ENCODE measurements at regions of chr3 and their contacts with region 1.

Region 1: GRCh38 chr3:49171119-49171774 is at the start of gene KLHDC8B:
- DNase-seq: peak; percentile 65 to 89 (median 76)
- ATAC-seq: peak; percentile 88
- H3K4me3 ChIP-seq: peak within 1 kb of the TSS; percentile 95
- H3K4me3 Mint-ChIP-seq: peak within 1 kb of the TSS; percentile 83 to 94 (median 88)
- H3K27ac ChIP-seq: peak within 1 kb of the TSS; percentile 58
- H3K27ac Mint-ChIP-seq: peak within 1 kb of the TSS; percentile 61 to 92 (median 78)
- H3K4me1 ChIP-seq: peaks cover 11 to 26% of the 10 kb centered on the region in 2 donors
- H3K4me1 Mint-ChIP-seq: peaks cover 8 to 40% (median 26%) of the 10 kb centered on the region in 7 donors
- H3K27me3 ChIP-seq: no peaks in the 10 kb centered on the region
- H3K27me3 Mint-ChIP-seq: no peaks in the 10 kb centered on the region
- total RNA-seq, gene KLHDC8B: 1.5 to 7.1 (median 5.2) TPM

Region 2: DNA sequence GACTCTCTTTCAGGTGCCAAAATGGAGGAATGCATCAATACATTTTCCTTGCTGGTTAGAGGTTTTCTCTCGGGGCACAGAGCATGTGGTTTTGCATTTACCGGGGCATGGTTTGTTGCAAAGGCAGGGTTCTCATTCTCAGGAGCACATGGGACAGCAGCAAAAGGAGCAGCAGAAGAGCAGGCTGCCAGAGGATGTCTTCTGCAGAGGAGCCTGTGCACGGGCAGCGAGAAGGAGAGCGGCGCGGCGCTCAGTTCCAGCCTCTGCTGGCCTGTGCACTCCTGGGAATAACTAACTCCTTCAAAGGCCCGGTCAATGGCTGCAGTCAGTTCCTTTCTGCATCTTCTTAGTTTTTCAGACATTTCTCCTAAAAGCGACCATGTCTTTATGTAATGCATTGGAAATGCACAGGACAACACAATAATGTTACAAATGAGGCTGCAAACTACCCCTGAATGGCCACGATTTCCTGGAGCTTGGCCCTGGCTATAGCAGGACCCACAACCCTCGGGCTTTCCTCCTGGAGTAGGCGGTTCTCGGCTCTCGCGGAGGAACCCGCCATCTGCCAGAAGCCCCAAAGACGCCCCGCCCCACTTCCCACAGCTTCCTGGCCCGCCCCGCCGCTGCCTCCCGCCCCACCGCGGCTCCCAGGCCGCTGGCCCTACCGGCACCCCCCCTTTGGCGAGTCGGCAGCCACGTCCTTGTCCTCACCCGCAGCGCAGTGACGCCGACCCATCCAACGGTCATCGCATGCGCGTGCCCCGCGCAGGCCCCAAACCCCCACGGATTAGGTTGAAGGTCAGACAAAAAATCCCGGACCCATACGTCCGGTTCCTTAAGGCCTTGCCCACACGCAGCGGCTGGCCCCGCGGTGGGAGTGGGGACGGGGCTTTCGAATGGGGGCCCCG is 105.5 kb after region 1 on chr3 and contains the start of gene C3orf62:
- CTCF ChIA-PET with region 1: no interaction called
- POLR2A ChIA-PET with region 1: no interaction called
- intact Hi-C with region 1: loop called (anchors 1 to 2 kb)
- DNase-seq: peak; percentile 41 to 85 (median 55)
- ATAC-seq: peak; percentile 91
- H3K4me3 ChIP-seq: peak within 1 kb of the TSS; percentile 77
- H3K4me3 Mint-ChIP-seq: peak within 1 kb of the TSS; percentile 80 to 91 (median 87)
- H3K27ac ChIP-seq: peak within 1 kb of the TSS; percentile 84
- H3K27ac Mint-ChIP-seq: peak within 1 kb of the TSS; percentile 81 to 94 (median 88)
- H3K4me1 ChIP-seq: peaks cover 10% of the 10 kb centered on the region in 2 donors
- H3K4me1 Mint-ChIP-seq: peaks cover 6 to 33% (median 27%) of the 10 kb centered on the region in 7 donors
- H3K27me3 ChIP-seq: no peaks in the 10 kb centered on the region
- H3K27me3 Mint-ChIP-seq: no peaks in the 10 kb centered on the region
- total RNA-seq, gene C3orf62: 8.6 to 14.5 (median 10.9) TPM

Region 3: GRCh38 chr3:49295489-49296058 is 124.3 kb after region 1 on chr3:
- CTCF ChIA-PET with region 1: no interaction called
- POLR2A ChIA-PET with region 1: no interaction called
- intact Hi-C with region 1: loop called in 1 of 2 experiments (anchors 1 kb)
- DNase-seq: peak in 7 of 9 donors; percentile 32 to 53 (median 48)
- ATAC-seq: peak; percentile 80
- H3K4me3 ChIP-seq: no peak overlapping the region
- H3K4me3 Mint-ChIP-seq: peak overlapping the region in 1 of 10 donors; percentile 19
- H3K27ac ChIP-seq: no peak overlapping the region
- H3K27ac Mint-ChIP-seq: peak overlapping the region; percentile 16 to 84 (median 42)
- H3K4me1 ChIP-seq: no peaks in the 10 kb centered on the region
- H3K4me1 Mint-ChIP-seq: peaks cover 0 to 7% (median 3%) of the 10 kb centered on the region in 7 donors
- H3K27me3 ChIP-seq: no peaks in the 10 kb centered on the region
- H3K27me3 Mint-ChIP-seq: no peaks in the 10 kb centered on the region